Sigmoid colon (tissue), 7 donors: ENCODE measurements at regions of chr9 and their contacts with region 1.

Region 1: DNA sequence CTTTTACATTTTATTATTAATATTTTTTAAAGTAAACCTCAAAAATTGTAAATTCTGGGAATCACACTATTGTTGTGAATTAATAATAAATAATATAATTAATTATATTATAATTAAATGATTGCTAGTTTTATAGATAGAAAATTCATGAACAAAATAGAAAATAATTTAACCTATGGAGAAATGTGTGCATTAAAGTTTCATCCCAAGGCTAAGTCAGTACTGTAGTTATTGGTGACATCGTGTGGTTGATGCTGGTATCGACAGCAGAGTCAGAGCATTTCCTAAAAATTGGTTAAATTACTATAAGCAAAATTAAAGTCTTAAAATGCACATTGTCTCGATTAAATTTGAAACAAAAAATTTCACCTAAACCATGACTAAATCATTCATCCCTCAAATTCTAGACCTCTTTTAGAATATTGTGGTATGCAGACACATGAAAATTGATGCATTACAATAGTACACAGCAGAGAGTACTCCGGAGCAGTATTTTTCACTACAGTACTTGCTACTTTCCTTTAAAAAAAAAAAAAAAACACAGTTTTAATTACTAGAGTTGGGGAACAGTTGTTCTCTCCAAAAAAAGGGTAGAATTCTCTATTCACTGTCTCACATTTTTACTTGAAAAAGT is 73.9 kb downstream of the RORB start:
- DNase-seq: no peak
- H3K4me3 ChIP-seq: no peak overlapping the region
- H3K27ac ChIP-seq: no peak overlapping the region
- H3K4me1 ChIP-seq: no peaks in the 10 kb centered on the region
- H3K27me3 ChIP-seq: no peaks in the 10 kb centered on the region
- CTCF ChIP-seq: peak in 3 of 4 experiments; percentile 25 to 47 (median 35)
- EP300 ChIP-seq: no peak
- POLR2A ChIP-seq: no peak

Region 2: GRCh38 chr9:73969936-73970335 is 601.1 kb before region 1 on chr9:
- intact Hi-C with region 1: no loop called
- DNase-seq: no peak
- H3K4me3 ChIP-seq: no peak overlapping the region
- H3K27ac ChIP-seq: no peak overlapping the region
- H3K4me1 ChIP-seq: no peaks in the 10 kb centered on the region
- H3K27me3 ChIP-seq: no peaks in the 10 kb centered on the region
- CTCF ChIP-seq: no peak
- EP300 ChIP-seq: no peak
- POLR2A ChIP-seq: no peak

Region 3: GRCh38 chr9:74431467-74431866 is 139.5 kb before region 1 on chr9:
- intact Hi-C with region 1: no loop called
- DNase-seq: no peak
- H3K4me3 ChIP-seq: no peak overlapping the region
- H3K27ac ChIP-seq: no peak overlapping the region
- H3K4me1 ChIP-seq: no peaks in the 10 kb centered on the region
- H3K27me3 ChIP-seq: no peaks in the 10 kb centered on the region
- CTCF ChIP-seq: no peak
- EP300 ChIP-seq: no peak
- POLR2A ChIP-seq: no peak

Region 4: GRCh38 chr9:75418518-75418917 is 847.5 kb after region 1 on chr9:
- intact Hi-C with region 1: loop called (anchors 10 kb)
- DNase-seq: no peak
- H3K4me3 ChIP-seq: no peak overlapping the region
- H3K27ac ChIP-seq: no peak overlapping the region
- H3K4me1 ChIP-seq: no peaks in the 10 kb centered on the region
- H3K27me3 ChIP-seq: no peaks in the 10 kb centered on the region
- CTCF ChIP-seq: no peak
- EP300 ChIP-seq: no peak
- POLR2A ChIP-seq: no peak